GM10248 (cell line): ENCODE measurements at regions of chr1 and their contacts with region 1.

Region 1: DNA sequence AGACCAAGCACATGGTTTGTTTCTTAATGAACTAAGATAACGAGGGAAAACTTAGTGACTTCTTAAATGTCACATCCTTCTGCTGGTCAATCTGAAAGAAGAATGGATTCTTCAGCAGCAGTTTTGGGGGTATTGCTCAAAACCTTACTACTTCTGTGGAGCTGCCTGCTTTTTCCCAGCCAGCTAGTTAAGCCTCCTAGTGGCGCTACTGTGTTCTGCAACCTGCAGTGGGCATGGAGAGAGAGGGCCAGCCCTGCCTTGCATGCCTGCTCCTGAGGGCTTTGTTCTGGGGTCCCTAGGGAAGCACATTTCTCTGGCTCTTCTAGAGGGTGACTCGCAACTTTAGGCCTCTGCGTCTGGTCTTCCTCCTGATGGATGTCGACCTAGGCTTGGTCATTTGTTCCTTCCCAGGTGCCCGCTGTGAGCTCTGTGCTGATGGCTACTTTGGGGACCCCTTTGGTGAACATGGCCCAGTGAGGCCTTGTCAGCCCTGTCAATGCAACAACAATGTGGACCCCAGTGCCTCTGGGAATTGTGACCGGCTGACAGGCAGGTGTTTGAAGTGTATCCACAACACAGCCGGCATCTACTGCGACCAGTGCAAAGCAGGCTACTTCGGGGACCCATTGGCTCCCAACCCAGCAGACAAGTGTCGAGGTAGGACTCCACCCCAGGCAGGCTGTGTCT is 42.0 kb downstream of the LAMC2 start:
- DNase-seq: peak; percentile 70
- CTCF ChIP-seq: peak; percentile 81

Region 2: DNA sequence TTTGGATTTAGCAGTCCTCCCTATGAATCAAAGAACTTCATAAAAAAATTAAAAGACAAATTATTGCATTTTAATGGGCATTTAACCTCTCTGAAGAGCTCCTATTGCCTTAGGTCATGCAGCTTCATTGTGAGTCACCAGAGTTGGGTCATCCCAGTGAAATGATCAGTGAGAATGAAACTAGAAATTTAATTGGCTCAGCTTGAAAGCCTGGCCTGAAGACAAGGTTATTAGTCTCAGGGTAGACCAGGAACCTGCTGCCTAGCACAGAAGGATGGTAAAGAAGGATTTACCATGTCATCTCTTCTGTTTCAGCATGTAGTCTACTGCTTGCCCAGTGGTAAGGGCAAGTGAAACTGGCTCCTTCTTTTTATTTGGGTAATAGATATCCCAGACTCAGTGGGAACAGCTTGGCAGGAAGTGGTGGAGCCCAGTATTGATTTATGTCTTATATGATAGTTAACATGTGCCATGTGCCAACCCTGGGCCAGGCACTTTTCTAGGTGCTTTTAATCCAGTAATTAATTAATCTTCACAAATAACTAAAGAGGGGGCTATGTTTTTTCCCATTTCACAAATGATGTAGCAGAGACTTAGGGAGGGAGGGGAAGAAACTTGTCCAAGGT is 18.5 kb before region 1 on chr1:
- CTCF ChIA-PET with region 1: interaction called, 61 read pairs
- POLR2A ChIA-PET with region 1: no interaction called
- DNase-seq: peak; percentile 46
- CTCF ChIP-seq: no peak

Region 3: GRCh38 chr1:183243161-183244050 is 15.3 kb after region 1 on chr1:
- CTCF ChIA-PET with region 1: interaction called, 57 read pairs
- POLR2A ChIA-PET with region 1: no interaction called
- DNase-seq: no peak
- CTCF ChIP-seq: no peak

Region 4: GRCh38 chr1:183259886-183260285 is 31.8 kb after region 1 on chr1:
- CTCF ChIA-PET with region 1: interaction called, 12 read pairs
- POLR2A ChIA-PET with region 1: no interaction called
- DNase-seq: no peak
- CTCF ChIP-seq: no peak

Region 5: GRCh38 chr1:183432548-183432875 is 204.4 kb after region 1 on chr1:
- CTCF ChIA-PET with region 1: no interaction called
- POLR2A ChIA-PET with region 1: no interaction called
- DNase-seq: no peak
- CTCF ChIP-seq: no peak